ENCODE measurements at regions of chr1 and their contacts with region 1.

Region 1: DNA sequence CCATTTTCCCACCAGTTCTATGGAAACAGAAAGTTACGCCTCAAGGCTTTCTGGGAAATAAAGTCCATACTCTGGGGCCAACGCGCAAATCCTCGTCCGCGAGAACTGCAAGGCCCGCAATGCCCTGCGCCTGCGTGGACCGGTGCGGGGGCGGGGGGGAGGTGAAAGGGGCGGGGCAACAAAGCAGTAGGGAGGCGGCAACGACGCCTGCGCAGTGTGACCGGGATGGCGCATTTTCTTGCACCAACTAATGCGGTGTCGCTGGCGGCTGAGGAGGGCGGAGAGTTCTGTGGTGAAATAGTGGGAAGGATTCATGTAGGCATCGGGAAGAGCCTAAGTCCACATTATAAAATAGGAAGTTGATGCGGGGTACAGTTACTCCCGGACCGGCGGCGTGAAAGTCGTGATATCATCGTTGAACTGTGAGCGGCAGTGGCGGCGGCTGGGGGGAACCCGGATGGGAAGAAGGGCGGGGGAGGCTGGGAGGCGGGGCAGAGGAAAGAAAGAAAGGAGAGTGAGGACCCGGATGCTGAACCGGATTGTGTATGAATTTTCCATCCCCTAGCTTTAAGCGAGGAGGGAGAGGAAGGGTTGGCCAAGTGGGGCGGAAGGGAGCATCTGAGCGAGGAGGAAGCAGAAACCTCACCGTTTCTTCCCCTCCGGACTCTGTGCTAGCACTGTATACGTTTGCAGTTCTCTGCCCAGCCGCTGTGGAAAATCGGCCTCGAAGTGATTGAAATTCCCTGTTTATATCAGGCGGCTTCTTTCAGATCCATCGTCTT is at the start of gene GGPS1:
- DNase-seq: peak; percentile 95 to 99 (median 98)
- H3K4me3 ChIP-seq: peak within 1 kb of the TSS; percentile 88 to 93
- H3K4me3 Mint-ChIP-seq: no peak within 1 kb of the TSS
- H3K27ac ChIP-seq: peak within 1 kb of the TSS; percentile 99
- H3K27ac Mint-ChIP-seq: peak within 1 kb of the TSS in 3 of 7 donors; percentile 90 to 93 (median 90)
- H3K4me1 ChIP-seq: peaks cover 73% of the 10 kb centered on the region
- H3K4me1 Mint-ChIP-seq: peaks cover 32 to 39% (median 35%) of the 10 kb centered on the region in 4 donors
- H3K27me3 ChIP-seq: no peaks in the 10 kb centered on the region
- H3K27me3 Mint-ChIP-seq: no peaks in the 10 kb centered on the region
- total RNA-seq, gene GGPS1: 50.3 to 52.5 TPM

Region 2: DNA sequence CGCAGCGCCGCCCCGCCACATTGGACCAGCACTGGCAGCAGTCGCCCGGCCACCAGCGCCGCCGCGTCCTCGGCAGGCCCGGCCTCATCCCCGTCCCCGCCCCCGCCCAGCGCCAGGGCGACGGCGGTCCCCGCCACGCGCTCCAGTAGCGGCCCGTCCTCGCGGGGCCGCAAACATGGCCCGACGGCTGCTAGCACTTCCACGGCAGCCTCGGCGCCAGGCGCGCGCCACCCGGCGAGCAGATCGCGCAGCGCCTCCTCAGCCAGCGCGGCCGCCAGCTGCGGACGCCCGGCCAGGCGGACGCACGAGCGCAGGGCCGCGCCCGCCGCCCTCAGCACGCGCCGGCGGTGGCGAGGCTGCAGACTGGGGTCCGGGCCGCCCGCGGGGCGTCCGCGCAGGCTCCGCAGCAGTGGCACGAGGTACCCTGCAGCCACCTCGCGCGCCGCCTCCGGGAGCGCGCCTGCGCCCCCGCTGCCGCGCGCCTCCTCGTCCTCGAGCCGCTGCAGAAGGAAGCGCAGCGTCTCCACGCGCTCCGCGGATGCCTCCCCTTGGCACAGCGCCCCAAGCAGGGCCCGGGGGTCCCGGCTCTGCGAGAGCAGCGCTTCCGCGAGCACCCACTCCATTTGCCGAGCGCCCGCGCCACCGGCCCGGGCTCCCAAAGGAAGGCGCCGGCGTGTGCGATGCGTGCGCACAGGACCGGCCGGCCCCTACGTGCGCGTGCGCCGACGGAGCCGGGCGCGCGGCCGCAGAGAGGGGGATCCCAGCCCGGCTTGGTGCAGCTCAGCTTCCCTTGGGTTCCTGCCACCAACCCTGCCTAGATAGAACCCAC is 849.9 kb before region 1 on chr1 and contains the start of gene TARBP1:
- CTCF ChIA-PET with region 1: no interaction called
- POLR2A ChIA-PET with region 1: no interaction called
- intact Hi-C with region 1: loop called (anchors 5 kb)
- DNase-seq: peak; percentile 73 to 83 (median 82)
- H3K4me3 ChIP-seq: peak within 1 kb of the TSS; percentile 47 to 63
- H3K4me3 Mint-ChIP-seq: peak within 1 kb of the TSS; percentile 87 to 93 (median 90)
- H3K27ac ChIP-seq: peak within 1 kb of the TSS; percentile 42
- H3K27ac Mint-ChIP-seq: peak within 1 kb of the TSS; percentile 57 to 96 (median 89)
- H3K4me1 ChIP-seq: peaks cover 29% of the 10 kb centered on the region
- H3K4me1 Mint-ChIP-seq: peaks cover 15 to 44% (median 27%) of the 10 kb centered on the region in 4 donors
- H3K27me3 ChIP-seq: no peaks in the 10 kb centered on the region
- H3K27me3 Mint-ChIP-seq: peaks cover 5 to 9% of the 10 kb centered on the region in 2 donors
- total RNA-seq, gene TARBP1: 25.8 to 27.5 TPM

Region 3: DNA sequence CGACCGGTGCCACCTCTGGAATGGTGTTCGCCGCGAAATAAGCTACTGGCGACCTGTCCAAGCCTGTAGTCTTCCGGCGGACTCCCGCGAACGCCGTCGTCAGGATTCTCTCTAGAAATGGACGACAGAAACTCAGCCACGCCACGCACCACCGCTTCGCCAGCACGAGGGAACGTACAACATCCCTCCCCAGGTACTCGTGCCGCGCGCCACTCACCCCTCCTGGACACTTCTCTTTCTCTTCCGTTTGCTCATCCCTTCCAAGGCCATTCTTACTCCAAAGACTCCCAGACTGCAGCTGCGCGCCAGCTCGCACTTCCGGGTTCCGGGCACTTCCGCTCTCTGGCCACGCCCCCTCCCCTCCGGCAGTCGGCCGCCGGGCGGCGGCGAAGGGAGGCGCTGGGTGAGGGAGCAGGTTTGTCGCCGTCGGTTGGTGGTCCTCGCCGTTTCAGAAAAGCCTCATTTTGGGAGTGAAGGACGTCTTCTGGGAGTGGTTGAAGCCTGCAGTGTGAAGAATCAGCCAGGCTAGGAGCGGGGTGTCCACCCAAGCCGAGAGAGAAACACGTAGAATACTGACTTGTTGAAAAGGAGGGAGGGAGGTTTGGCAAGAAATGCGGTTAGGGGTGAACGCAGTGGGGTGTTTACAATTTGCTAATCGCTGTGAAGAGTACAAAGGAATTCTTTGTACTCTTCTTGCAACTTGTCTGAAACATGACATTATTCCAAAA is 167.4 kb before region 1 on chr1 and contains the start of gene RBM34:
- CTCF ChIA-PET with region 1: no interaction called
- POLR2A ChIA-PET with region 1: interaction called, 16 read pairs
- intact Hi-C with region 1: loop called (anchors 2 kb)
- DNase-seq: peak; percentile 90 to 93 (median 91)
- H3K4me3 ChIP-seq: peak within 1 kb of the TSS; percentile 79 to 80
- H3K4me3 Mint-ChIP-seq: peak within 1 kb of the TSS; percentile 94 to 99 (median 98)
- H3K27ac ChIP-seq: peak within 1 kb of the TSS; percentile 92
- H3K27ac Mint-ChIP-seq: peak within 1 kb of the TSS; percentile 95 to 99 (median 98)
- H3K4me1 ChIP-seq: peaks cover 50% of the 10 kb centered on the region
- H3K4me1 Mint-ChIP-seq: peaks cover 15 to 30% (median 22%) of the 10 kb centered on the region in 4 donors
- H3K27me3 ChIP-seq: no peaks in the 10 kb centered on the region
- H3K27me3 Mint-ChIP-seq: no peaks in the 10 kb centered on the region
- total RNA-seq, gene RBM34: 120 TPM

Region 4: DNA sequence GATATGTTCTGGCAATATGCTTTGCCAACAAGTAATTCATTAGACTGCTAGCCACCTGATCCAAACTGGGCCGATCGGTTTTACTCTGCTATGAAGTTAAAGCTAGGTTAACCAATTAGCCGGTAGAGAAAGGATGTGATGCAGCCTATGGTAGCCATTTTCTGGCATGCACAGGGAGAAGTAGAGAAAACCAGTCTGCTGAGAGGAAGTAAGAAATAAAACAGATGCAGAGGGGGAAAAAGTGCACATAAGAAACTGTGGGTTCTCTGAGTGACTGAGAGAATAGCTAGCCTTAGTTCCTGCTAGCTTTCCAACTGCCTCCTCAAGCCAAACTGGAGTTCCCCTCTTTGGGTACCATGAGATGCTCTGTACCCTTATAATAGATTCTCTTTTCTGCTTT is 53.3 kb before region 1 on chr1:
- CTCF ChIA-PET with region 1: interaction called, 3 read pairs
- POLR2A ChIA-PET with region 1: interaction called, 19 read pairs
- intact Hi-C with region 1: no loop called
- DNase-seq: peak in 1 of 5 donors; percentile 39
- H3K4me3 ChIP-seq: no peak overlapping the region
- H3K4me3 Mint-ChIP-seq: peak overlapping the region; percentile 4 to 63 (median 19)
- H3K27ac ChIP-seq: peak overlapping the region; percentile 3
- H3K27ac Mint-ChIP-seq: peak overlapping the region; percentile 9 to 82 (median 37)
- H3K4me1 ChIP-seq: peaks cover 84% of the 10 kb centered on the region
- H3K4me1 Mint-ChIP-seq: peaks cover 53 to 88% (median 70%) of the 10 kb centered on the region in 4 donors
- H3K27me3 ChIP-seq: no peaks in the 10 kb centered on the region
- H3K27me3 Mint-ChIP-seq: no peaks in the 10 kb centered on the region

Region 5: GRCh38 chr1:235304549-235305451 is 23.7 kb before region 1 on chr1:
- CTCF ChIA-PET with region 1: interaction called, 3 read pairs
- POLR2A ChIA-PET with region 1: interaction called, 6 read pairs
- intact Hi-C with region 1: loop called (anchors 2 kb)
- DNase-seq: peak; percentile 65 to 82 (median 78)
- H3K4me3 ChIP-seq: peak overlapping the region in 1 of 2 donors; percentile 24
- H3K4me3 Mint-ChIP-seq: peak overlapping the region; percentile 63 to 85 (median 77)
- H3K27ac ChIP-seq: peak overlapping the region; percentile 78
- H3K27ac Mint-ChIP-seq: peak overlapping the region; percentile 91 to 98 (median 95)
- H3K4me1 ChIP-seq: peaks cover 84% of the 10 kb centered on the region
- H3K4me1 Mint-ChIP-seq: peaks cover 34 to 76% (median 53%) of the 10 kb centered on the region in 4 donors
- H3K27me3 ChIP-seq: no peaks in the 10 kb centered on the region
- H3K27me3 Mint-ChIP-seq: no peaks in the 10 kb centered on the region

Region 6: DNA sequence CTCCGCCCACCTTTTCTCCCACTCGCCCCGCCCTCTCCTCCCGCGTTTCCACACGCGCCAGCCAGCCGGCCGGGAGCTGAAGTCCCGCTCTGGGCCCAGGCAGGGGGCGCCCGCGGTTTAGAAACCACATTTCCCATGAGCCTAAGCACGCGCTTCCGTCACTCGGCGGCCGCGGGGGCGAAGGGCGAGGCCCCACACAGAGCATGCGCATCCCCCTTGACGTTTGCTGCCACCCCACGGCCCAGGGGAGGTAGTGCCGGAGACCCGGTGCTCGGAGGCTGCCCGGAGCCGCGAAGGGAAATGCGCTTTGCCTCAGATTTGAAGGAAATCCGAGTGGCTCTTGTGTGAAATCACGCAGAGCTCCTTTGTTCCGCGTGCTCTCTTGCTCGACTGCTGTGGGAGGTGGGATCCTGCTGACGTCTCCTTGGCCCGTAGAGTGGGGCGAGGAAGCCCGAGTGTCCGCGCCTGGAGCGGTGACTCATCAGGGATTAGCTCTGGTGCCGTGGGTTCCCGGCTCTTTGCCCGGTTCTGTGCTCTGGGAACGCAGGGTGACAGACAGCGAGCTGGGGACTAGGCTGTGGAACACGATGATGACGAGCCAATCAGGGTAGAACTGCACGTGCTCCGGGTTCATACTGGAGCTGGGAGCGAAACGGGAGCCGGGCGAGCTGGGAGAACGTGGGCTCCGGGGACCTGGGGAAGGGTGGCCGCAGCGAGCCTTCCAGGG is 176.1 kb after region 1 on chr1:
- CTCF ChIA-PET with region 1: no interaction called
- POLR2A ChIA-PET with region 1: interaction called, 9 read pairs
- intact Hi-C with region 1: loop called (anchors 1 kb)
- DNase-seq: peak; percentile 97 to 99 (median 98)
- H3K4me3 ChIP-seq: peak overlapping the region; percentile 74
- H3K4me3 Mint-ChIP-seq: peak overlapping the region; percentile 92 to 98 (median 96)
- H3K27ac ChIP-seq: peak overlapping the region; percentile 85
- H3K27ac Mint-ChIP-seq: peak overlapping the region; percentile 97 to 100 (median 98)
- H3K4me1 ChIP-seq: peaks cover 20% of the 10 kb centered on the region
- H3K4me1 Mint-ChIP-seq: peaks cover 12 to 32% (median 19%) of the 10 kb centered on the region in 4 donors
- H3K27me3 ChIP-seq: no peaks in the 10 kb centered on the region
- H3K27me3 Mint-ChIP-seq: peaks cover 0 to 1% of the 10 kb centered on the region in 2 donors